ENCODE measurements at regions of chr5 and their contacts with region 1.

Region 1: DNA sequence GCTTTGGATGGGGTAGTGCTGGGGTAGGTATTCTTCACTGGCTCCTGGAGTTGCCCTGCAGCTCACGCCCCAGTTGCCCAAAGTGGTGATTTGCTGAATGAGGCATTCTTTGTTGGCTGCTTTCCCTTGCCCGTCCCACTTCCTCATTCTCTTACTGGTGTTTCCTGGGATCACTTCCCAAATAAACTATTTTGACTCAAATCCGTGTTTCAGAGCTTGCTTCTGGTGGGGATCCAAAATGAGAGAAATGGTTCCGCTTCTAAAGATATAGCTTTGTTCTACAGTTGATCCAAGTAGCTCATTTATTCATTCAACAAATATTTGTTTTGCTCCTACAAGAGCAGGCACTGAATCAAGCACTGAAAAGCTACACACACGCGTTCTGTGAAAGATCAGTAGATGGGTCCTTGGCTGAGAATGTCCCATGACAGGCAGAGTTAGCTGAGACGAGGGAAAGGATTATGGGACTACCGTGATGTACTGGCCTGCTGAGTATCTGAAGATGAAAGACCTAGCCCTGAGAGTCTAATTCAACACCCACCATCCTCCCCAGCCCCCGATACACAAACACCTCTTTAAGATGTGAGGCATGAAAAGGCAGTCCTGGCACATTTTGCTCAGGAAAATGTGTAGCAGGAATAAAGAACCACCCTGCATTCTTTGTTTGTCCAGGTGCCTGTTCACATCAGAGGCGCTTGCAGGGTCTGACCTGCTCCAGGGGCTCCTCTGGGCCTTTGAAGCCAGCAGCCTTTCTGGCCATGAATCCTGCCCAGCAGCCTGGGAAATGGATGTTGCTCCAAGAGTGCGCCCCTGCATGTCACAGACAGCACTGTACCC is 143.1 kb upstream of the RANBP3L start:
- DNase-seq: peak; percentile 73
- H3K4me3 Mint-ChIP-seq: peak overlapping the region; percentile 37
- H3K27ac Mint-ChIP-seq: peak overlapping the region; percentile 84
- H3K4me1 Mint-ChIP-seq: peaks cover 38% of the 10 kb centered on the region
- H3K27me3 Mint-ChIP-seq: no peaks in the 10 kb centered on the region
- CTCF ChIP-seq: no peak

Region 2: GRCh38 chr5:36373527-36374086 is 71.2 kb before region 1 on chr5:
- CTCF ChIA-PET with region 1: no interaction called
- POLR2A ChIA-PET with region 1: no interaction called
- intact Hi-C with region 1: no loop called
- DNase-seq: peak; percentile 99
- H3K4me3 Mint-ChIP-seq: no peak overlapping the region
- H3K27ac Mint-ChIP-seq: peak overlapping the region; percentile 24
- H3K4me1 Mint-ChIP-seq: peaks cover 40% of the 10 kb centered on the region
- H3K27me3 Mint-ChIP-seq: no peaks in the 10 kb centered on the region
- CTCF ChIP-seq: no peak

Region 3: GRCh38 chr5:36459176-36460135 is 14.7 kb after region 1 on chr5:
- CTCF ChIA-PET with region 1: interaction called, 16 read pairs
- POLR2A ChIA-PET with region 1: interaction called, 31 read pairs
- intact Hi-C with region 1: no loop called
- DNase-seq: peak; percentile 53
- H3K4me3 Mint-ChIP-seq: no peak overlapping the region
- H3K27ac Mint-ChIP-seq: no peak overlapping the region
- H3K4me1 Mint-ChIP-seq: peaks cover 31% of the 10 kb centered on the region
- H3K27me3 Mint-ChIP-seq: no peaks in the 10 kb centered on the region
- CTCF ChIP-seq: peak; percentile 23

Region 4: DNA sequence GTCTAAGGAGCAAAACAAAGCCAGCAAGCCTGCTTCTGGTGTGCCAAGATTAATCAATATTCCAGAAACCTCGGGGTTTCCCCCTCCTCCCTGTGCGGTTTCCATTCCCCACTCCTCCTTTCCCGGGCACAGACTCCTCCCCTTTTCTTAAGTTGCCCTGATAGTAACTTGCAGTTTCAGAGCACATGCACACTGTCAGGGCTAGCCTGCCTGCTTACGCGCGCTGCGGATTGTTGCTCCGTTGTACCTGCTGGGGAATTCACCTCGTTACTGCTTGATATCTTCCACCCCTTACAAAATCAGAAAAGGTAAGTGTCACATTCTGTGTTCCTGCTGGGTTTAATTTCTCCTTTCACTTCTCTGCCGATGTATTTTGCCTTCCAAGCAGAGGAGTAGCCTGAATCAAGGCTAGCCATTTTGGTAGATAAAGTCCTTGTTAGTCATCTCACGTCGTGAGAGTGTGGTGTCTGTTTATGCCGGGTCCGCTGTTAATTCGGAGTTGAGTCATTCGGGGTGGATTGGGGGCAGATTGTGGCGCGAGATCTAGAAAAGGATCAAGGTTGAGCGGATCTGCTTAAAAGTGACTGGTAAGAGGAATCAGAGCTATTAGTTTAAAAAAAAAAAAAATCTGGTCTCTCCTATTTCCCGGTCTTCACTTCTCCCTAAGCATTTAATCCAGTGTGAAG is 161.8 kb after region 1 on chr5 and contains the start of gene SLC1A3:
- CTCF ChIA-PET with region 1: interaction called, 4 read pairs
- POLR2A ChIA-PET with region 1: interaction called, 10 read pairs
- intact Hi-C with region 1: no loop called
- DNase-seq: peak; percentile 84
- H3K4me3 Mint-ChIP-seq: peak within 1 kb of the TSS; percentile 88
- H3K27ac Mint-ChIP-seq: peak within 1 kb of the TSS; percentile 84
- H3K4me1 Mint-ChIP-seq: peaks cover 9% of the 10 kb centered on the region
- H3K27me3 Mint-ChIP-seq: no peaks in the 10 kb centered on the region
- CTCF ChIP-seq: no peak
- total RNA-seq, gene SLC1A3: 5.9 and 9.6 TPM in 2 replicates

Measured in MCF 10A (cell line).